ENCODE measurements at regions of chr4 and their contacts with region 1.

Region 1: GRCh38 chr4:102518703-102519131 is 17.6 kb downstream of the NFKB1 start:
- DNase-seq: peak in 7 of 9 donors; percentile 41 to 77 (median 55)
- ATAC-seq: peak; percentile 89
- H3K4me3 ChIP-seq: no peak overlapping the region
- H3K4me3 Mint-ChIP-seq: peak overlapping the region; percentile 7 to 75 (median 60)
- H3K27ac ChIP-seq: peak overlapping the region; percentile 48
- H3K27ac Mint-ChIP-seq: peak overlapping the region in 8 of 9 donors; percentile 76 to 95 (median 89)
- H3K4me1 ChIP-seq: peaks cover 20 to 43% of the 10 kb centered on the region in 2 donors
- H3K4me1 Mint-ChIP-seq: peaks cover 49 to 91% (median 87%) of the 10 kb centered on the region in 7 donors
- H3K27me3 ChIP-seq: no peaks in the 10 kb centered on the region
- H3K27me3 Mint-ChIP-seq: no peaks in the 10 kb centered on the region

Region 2: DNA sequence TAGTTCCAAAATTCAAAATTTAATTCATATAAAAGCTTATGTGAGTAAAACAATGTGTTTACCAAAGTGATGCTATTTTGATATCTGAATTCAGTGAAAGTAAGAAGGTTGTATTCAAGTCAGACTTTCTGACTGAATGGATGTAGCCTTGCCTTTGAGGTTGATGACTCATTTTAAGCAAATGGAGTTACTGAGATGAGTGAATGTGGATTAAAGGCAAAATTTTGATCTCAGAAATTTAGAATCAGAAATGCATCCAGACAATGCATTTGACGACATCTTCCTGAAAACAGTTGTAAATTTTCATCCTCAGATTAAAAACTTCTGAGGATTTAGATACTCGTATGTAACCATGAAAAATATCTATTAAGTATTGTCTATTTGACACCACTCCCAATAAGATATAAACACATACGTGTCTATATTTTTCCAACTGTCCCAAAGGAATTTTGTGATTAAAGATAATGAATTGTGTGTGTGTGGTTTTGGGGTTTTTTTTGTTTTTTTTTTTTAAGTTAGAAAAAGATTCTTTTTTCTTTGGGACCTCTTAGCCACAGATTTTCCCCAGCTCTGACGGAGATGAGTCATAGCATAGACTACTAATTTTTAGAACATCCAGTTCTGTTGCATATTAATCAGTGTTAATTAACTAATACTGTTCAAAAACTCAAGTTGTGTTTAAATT is 16.8 kb after region 1 on chr4:
- CTCF ChIA-PET with region 1: no interaction called
- POLR2A ChIA-PET with region 1: interaction called, 4 read pairs
- intact Hi-C with region 1: loop called in 1 of 2 experiments (anchors 2 kb)
- DNase-seq: no peak
- ATAC-seq: peak; percentile 30
- H3K4me3 ChIP-seq: no peak overlapping the region
- H3K4me3 Mint-ChIP-seq: no peak overlapping the region
- H3K27ac ChIP-seq: no peak overlapping the region
- H3K27ac Mint-ChIP-seq: peak overlapping the region in 1 of 9 donors; percentile 62
- H3K4me1 ChIP-seq: peaks cover 19 to 21% of the 10 kb centered on the region in 2 donors
- H3K4me1 Mint-ChIP-seq: peaks cover 22 to 71% (median 53%) of the 10 kb centered on the region in 7 donors
- H3K27me3 ChIP-seq: no peaks in the 10 kb centered on the region
- H3K27me3 Mint-ChIP-seq: no peaks in the 10 kb centered on the region